ENCODE measurements at regions of chr2 and their contacts with region 1.

Region 1: DNA sequence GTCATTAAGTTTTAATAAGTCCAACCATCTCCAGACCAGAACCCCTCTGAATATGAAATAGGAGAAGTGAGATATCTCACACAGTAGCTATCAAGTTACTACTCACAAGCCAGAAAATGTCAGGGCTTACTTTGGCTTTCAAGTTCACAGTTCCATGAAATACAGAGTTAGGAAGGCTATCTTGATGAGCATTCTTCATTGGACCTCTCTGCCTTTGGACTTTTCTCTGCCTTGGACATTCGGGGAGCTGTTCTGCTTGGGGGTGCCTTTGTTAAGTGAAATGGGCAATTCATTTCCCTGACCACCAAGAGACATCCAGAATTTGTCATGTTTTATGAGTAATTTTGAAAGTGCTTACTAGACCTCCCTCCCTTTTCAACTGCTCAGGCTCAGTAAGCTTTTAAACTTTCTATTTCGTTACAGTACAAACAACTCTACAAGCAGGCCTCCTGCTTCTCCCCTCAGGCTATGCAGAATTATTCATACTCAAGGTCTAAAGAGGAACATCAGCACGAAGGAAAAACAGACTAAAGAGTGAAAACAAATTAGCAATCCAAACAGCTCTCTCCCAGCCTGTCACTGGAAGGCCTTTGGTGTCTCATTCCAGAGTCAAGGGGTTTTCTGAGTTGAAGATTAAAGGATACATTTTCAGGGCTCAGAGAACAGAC is 95.3 kb downstream of the MREG start:
- DNase-seq: no peak
- ATAC-seq: peak; percentile 21
- H3K4me3 ChIP-seq: no peak overlapping the region
- H3K4me1 ChIP-seq: no peaks in the 10 kb centered on the region
- CTCF ChIP-seq: no peak

Region 2: GRCh38 chr2:215454519-215455246 is 463.4 kb before region 1 on chr2:
- intact Hi-C with region 1: loop called (anchors 5 to 10 kb)
- DNase-seq: peak in 1 of 3 donors; percentile 40
- ATAC-seq: peak; percentile 74
- H3K4me3 ChIP-seq: no peak overlapping the region
- H3K4me1 ChIP-seq: no peaks in the 10 kb centered on the region
- CTCF ChIP-seq: peak; percentile 73

Region 3: GRCh38 chr2:215624423-215624829 is 293.7 kb before region 1 on chr2:
- intact Hi-C with region 1: loop called in 1 of 2 experiments (anchors 5 kb)
- DNase-seq: no peak
- ATAC-seq: peak; percentile 50
- H3K4me3 ChIP-seq: no peak overlapping the region
- H3K4me1 ChIP-seq: no peaks in the 10 kb centered on the region
- CTCF ChIP-seq: no peak